ENCODE measurements at regions of chr2 and their contacts with region 1.

Region 1: GRCh38 chr2:45964226-45964845 is 312.9 kb downstream of the PRKCE start:
- DNase-seq: peak; percentile 96
- H3K4me3 Mint-ChIP-seq: peak overlapping the region; percentile 36
- H3K27ac Mint-ChIP-seq: peak overlapping the region; percentile 92
- H3K4me1 Mint-ChIP-seq: peaks cover 81% of the 10 kb centered on the region
- H3K27me3 Mint-ChIP-seq: no peaks in the 10 kb centered on the region
- CTCF ChIP-seq: no peak

Region 2: DNA sequence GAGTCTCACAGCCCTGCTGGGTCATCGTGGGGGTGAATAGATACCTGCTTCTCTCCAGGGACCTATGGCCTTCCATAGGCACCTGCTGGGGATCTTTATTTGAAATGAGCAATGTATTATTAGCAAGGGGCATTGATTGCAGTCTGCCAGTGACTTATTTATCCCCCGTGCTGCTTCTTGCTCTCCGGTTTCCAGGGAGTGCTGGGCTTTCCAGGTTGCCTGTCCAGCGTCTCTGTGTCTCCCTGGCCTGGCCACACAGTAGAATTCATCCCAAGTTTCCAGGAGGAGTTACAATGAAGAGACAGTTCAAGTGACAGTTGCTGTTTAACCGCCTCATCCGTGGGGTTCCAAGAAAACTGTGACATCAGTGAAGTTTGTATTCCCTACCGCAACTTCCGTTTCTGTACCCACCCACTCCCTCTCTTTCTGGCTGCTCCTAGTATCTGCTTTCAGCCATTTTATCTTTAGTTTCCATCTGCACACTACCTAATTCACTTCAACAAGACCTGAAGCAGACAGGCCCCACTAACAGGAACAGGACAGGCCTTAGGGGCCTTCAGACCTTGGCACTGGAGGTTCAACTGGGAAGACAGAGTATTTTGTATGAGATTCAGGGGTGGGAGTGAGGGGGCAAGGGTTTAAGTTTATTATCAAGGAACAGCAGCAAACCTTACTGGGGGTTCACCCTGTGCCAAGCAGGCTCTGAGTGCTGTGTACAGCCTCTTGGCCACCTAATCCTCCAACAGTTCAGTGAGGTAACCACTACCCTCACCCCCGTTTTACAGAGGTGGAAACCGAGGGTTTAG is 178.1 kb before region 1 on chr2:
- CTCF ChIA-PET with region 1: no interaction called
- intact Hi-C with region 1: no loop called
- DNase-seq: no peak
- H3K4me3 Mint-ChIP-seq: no peak overlapping the region
- H3K27ac Mint-ChIP-seq: no peak overlapping the region
- H3K4me1 Mint-ChIP-seq: no peaks in the 10 kb centered on the region
- H3K27me3 Mint-ChIP-seq: no peaks in the 10 kb centered on the region
- CTCF ChIP-seq: no peak

Region 3: DNA sequence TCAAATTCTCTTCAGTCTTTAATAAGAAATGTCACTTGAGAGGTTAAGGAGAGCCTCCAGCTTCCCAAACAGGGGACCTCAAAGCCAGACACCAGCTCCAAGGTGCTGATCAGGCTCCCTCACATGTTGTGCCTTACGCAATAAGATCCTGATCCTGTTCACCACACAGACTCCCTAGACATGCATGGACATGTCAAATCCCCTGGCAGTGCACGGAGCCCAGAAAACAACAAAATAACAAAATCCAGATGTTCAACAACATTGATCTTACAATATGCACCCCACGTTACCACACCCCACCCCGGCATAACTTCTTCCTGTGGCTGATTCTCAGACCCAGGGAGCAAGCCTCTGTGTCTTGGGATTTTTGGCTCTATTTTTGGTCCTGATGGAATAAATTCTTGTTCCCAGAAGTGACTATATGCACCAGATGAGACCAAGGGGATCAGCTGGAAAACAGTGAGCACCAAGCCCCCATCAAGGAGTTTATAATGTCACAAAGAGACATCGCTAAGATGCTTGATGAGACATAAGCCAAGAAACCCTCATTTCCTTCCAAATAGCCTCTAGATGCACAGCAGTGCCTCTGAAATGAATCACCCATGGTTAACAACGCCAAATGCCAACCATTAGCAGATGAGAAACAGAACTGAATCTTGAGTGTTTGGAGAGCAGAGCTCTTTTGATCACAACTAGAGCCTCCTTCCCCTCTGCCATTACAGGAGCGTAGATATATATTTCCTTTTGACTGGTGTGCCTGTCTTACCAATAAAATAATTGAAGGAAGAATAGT is 114.6 kb before region 1 on chr2:
- CTCF ChIA-PET with region 1: no interaction called
- intact Hi-C with region 1: no loop called
- DNase-seq: no peak
- H3K4me3 Mint-ChIP-seq: no peak overlapping the region
- H3K27ac Mint-ChIP-seq: no peak overlapping the region
- H3K4me1 Mint-ChIP-seq: peaks cover 32% of the 10 kb centered on the region
- H3K27me3 Mint-ChIP-seq: no peaks in the 10 kb centered on the region
- CTCF ChIP-seq: no peak

Region 4: DNA sequence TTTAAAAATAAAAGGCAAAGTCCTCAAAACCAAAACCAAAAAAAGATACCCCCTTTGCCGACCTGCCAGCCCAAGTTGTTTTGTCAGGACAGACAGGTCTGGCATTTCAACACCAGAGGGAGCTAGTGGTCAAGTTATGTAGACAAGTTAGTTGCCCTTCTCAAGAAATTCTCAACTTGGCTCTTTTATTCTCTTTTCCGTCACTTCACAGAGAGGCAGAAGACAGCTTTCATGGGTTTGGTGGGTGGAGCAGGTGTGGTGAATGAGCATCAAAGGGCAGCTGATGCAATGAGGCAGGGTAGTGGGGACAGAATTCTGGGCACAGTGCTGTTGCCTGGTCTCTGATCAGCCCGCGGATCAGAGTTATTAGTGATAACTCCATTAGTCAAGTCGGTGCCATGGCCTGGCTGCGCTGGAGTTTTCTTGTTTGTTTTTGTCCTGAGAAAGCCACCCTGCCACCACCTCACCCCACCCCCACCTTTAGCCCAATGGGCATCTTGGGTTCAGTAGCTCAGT is 29.2 kb after region 1 on chr2:
- CTCF ChIA-PET with region 1: interaction called, 3 read pairs
- intact Hi-C with region 1: loop called (anchors 2 kb)
- DNase-seq: peak; percentile 70
- H3K4me3 Mint-ChIP-seq: peak overlapping the region; percentile 9
- H3K27ac Mint-ChIP-seq: no peak overlapping the region
- H3K4me1 Mint-ChIP-seq: peaks cover 25% of the 10 kb centered on the region
- H3K27me3 Mint-ChIP-seq: no peaks in the 10 kb centered on the region
- CTCF ChIP-seq: peak; percentile 62